WTC11 (cell line): ENCODE measurements at regions of chr17 and their contacts with region 1.

Region 1: DNA sequence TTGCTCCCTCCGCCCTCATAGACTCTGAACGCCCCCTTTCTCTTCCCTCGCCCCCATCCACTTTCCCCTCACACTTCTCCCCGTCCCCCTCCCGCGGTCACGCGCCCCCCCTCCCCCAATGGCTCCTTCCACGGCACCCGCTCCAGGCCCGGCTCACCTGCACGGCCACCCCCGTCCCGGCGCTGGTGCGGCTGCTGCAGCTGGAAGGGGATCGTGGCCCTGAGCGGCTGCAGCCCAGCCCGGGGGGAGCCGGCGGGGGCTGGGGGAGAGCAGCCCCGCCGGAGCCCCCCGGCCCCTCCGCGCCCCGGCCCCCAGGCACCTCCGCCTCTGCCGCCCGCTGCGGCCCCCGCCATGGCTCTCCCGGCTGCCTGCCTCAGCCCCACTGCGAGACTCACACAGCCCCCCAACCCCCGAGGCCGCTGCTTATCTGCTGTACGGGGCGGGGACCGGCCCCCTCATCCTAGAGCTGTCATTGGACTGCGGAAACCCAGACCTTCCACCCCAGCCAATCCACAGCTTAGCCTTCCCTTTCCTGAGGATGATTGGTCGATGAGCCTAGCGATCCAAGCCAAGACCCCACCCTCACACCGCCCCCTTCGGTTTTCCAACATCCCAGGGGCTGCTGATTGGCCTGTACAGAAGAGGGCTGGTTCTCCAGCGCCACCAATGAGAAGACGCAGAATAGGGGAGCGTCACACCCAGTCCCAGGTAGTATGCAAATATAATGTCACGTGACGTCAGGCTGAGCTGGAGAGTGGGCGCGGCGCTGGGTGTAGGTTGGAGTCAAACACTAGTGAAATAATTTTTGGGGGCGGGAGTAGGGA is at the start of gene FAM117A:
- DNase-seq: peak; percentile 98
- ATAC-seq: peak; percentile 98
- H3K4me3 Mint-ChIP-seq: peak within 1 kb of the TSS; percentile 93
- H3K27ac Mint-ChIP-seq: peak within 1 kb of the TSS; percentile 74
- H3K4me1 Mint-ChIP-seq: peaks cover 39% of the 10 kb centered on the region
- H3K27me3 Mint-ChIP-seq: peaks cover 29% of the 10 kb centered on the region
- CTCF ChIP-seq: no peak
- total RNA-seq, gene FAM117A: 26.2 to 30.4 TPM (median 29.7 TPM) in 3 replicates

Region 2: GRCh38 chr17:49788478-49789242 is 24.7 kb after region 1 on chr17 and contains the start of gene KAT7:
- CTCF ChIA-PET with region 1: interaction called, 13 read pairs
- POLR2A ChIA-PET with region 1: interaction called, 12 read pairs
- DNase-seq: peak; percentile 99
- ATAC-seq: peak; percentile 96
- H3K4me3 Mint-ChIP-seq: peak within 1 kb of the TSS; percentile 80
- H3K27ac Mint-ChIP-seq: peak within 1 kb of the TSS; percentile 90
- H3K4me1 Mint-ChIP-seq: peaks cover 25% of the 10 kb centered on the region
- H3K27me3 Mint-ChIP-seq: peaks cover 15% of the 10 kb centered on the region
- CTCF ChIP-seq: no peak
- total RNA-seq, gene KAT7: 165 to 199 TPM (median 171 TPM) in 3 replicates